ENCODE measurements at regions of chr19 and their contacts with region 1.

Region 1: DNA sequence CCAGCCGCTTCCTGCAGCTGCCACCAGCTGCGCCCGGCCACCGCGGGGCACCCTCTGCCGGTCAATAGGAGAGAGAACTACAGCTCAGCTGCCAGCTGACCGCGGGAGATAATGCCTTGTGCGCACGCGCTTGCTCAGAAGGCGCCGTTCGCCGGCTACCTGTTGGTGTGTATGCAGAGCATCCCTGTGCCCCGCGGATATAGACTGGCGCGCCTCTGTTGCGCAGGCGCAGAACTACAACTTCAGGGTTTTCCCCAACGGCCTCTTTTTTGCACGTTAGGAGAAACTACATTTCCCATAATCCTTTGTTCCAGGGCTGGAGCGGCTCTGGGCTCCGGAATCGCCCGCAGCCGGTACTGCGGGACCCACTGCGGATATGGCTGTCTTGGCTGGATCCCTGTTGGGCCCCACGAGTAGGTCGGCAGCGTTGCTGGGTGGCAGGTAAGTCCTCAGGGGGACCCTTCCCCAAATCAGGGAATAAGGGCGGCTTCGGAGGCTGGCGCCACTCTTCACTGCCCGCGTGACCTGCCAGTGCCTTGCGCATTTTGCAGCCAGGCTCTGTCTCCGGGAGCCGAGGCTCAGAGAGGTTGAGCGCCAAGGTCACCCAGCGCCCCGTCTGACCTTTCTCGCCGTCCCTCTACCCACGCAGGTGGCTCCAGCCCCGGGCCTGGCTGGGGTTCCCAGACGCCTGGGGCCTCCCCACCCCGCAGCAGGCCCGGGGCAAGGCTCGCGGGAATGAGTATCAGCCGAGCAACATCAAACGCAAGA is at the start of gene MRPL34:
- DNase-seq: peak; percentile 98
- H3K4me3 Mint-ChIP-seq: peak within 1 kb of the TSS; percentile 91
- H3K27ac Mint-ChIP-seq: peak within 1 kb of the TSS; percentile 93
- H3K4me1 Mint-ChIP-seq: peaks cover 42% of the 10 kb centered on the region
- H3K27me3 Mint-ChIP-seq: no peaks in the 10 kb centered on the region
- total RNA-seq, gene MRPL34: 101 and 103 TPM in 2 replicates

Region 2: DNA sequence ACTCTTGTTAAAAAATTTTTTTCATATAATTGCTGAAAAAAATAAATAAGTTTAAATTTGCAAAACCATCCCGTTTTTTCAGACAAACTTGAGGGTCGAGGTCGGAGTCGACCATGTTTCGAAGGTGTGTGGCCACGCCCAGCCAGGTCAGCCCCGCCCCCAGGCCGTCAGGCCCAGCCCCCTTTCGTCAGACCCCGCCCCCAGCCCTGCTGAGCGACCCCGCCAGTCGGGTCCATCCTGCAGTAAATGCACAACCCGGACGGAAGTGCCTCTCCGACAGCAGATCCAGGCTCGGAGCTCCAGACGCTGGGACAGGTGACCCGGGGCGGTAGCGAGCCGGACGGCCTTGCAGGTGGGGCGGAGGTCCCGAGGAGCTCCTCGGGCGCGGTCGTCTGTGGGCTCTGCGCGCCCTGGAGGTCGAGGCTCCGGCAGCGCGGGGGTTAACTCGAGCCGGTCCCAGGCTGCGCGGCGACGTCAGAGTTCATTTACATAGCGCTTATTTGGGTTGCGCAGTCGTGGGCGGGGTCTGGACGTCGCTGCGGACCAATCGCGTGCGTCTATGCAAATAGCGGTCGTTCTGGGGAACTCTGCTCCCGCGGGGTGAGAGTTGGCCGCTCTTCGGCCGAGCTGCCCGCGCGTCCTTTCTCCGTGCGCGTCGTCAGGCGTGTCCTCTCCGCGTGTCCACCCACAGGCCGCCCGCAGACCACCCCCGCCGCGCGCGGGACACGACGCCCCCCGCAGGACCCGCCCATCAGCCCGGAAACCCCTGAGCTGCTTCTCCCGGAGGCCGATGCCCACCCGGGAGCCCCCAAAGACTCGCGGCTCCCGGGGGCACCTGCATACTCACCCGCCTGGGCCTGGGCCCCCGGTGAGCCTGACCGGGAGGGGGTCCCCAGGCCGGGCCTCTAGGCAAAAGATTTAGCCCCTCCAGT is 79.4 kb before region 1 on chr19 and contains the start of gene OCEL1:
- intact Hi-C with region 1: loop called (anchors 5 kb)
- DNase-seq: peak; percentile 99
- H3K4me3 Mint-ChIP-seq: peak within 1 kb of the TSS; percentile 95
- H3K27ac Mint-ChIP-seq: peak within 1 kb of the TSS; percentile 99
- H3K4me1 Mint-ChIP-seq: peaks cover 3% of the 10 kb centered on the region
- H3K27me3 Mint-ChIP-seq: no peaks in the 10 kb centered on the region
- total RNA-seq, gene OCEL1: 17.8 and 23.0 TPM in 2 replicates

Region 3: DNA sequence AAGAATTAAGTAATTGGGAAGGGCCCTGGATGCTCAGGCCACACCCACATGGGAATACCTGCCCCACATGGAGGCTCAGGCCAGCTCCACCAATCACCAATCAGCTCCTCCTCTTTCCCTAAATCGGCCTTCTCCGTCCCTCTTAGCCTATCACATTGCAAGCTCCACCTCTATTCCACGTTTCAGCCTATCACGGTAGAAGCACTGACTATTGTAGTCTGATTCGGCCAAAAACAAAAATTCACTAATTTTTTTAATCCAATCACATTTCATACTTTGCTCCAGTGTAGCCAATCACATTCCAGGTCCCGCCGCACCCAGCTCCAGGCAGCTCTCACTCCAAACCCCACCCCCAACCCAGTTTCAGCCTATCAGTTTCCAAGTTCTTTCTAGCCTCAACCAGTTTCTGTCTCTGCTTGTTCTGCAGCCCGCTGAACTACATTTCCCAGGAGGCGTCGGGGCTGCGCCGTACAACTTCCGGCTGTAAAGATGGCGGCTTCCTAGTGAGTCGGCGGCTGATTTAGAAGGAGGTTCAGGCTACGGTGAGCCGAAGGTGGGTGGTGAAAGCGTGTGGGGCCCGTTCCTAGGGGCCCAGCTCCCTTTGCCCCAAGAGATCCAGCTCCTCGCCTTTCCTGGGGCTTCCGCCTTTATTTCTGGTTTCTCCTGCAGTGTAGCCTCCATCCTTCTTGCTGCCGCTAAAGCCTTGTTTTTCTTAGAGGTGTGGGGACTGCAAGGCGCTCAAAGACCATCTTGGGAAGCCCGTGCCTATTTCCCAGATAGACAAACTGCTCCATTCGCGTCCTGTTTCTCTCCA is 38.5 kb before region 1 on chr19 and contains the start of gene BABAM1:
- intact Hi-C with region 1: loop called (anchors 1 kb)
- DNase-seq: peak; percentile 98
- H3K4me3 Mint-ChIP-seq: peak within 1 kb of the TSS; percentile 95
- H3K27ac Mint-ChIP-seq: peak within 1 kb of the TSS; percentile 79
- H3K4me1 Mint-ChIP-seq: peaks cover 14% of the 10 kb centered on the region
- H3K27me3 Mint-ChIP-seq: no peaks in the 10 kb centered on the region
- total RNA-seq, gene BABAM1: 127 TPM in 2 replicates

Region 4: GRCh38 chr19:17292286-17293097 is 13.2 kb before region 1 on chr19:
- intact Hi-C with region 1: loop called (anchors 1 kb)
- DNase-seq: peak; percentile 95
- H3K4me3 Mint-ChIP-seq: peak overlapping the region; percentile 92
- H3K27ac Mint-ChIP-seq: peak overlapping the region; percentile 89
- H3K4me1 Mint-ChIP-seq: peaks cover 3% of the 10 kb centered on the region
- H3K27me3 Mint-ChIP-seq: peaks cover 7% of the 10 kb centered on the region

Region 5: GRCh38 chr19:17336872-17337722 is 31.4 kb after region 1 on chr19 and contains the start of gene GTPBP3:
- intact Hi-C with region 1: loop called (anchors 1 kb)
- DNase-seq: peak; percentile 99
- H3K4me3 Mint-ChIP-seq: peak within 1 kb of the TSS; percentile 99
- H3K27ac Mint-ChIP-seq: peak within 1 kb of the TSS; percentile 94
- H3K4me1 Mint-ChIP-seq: peaks cover 30% of the 10 kb centered on the region
- H3K27me3 Mint-ChIP-seq: no peaks in the 10 kb centered on the region
- total RNA-seq, gene GTPBP3: 69.9 and 70.3 TPM in 2 replicates

Region 6: DNA sequence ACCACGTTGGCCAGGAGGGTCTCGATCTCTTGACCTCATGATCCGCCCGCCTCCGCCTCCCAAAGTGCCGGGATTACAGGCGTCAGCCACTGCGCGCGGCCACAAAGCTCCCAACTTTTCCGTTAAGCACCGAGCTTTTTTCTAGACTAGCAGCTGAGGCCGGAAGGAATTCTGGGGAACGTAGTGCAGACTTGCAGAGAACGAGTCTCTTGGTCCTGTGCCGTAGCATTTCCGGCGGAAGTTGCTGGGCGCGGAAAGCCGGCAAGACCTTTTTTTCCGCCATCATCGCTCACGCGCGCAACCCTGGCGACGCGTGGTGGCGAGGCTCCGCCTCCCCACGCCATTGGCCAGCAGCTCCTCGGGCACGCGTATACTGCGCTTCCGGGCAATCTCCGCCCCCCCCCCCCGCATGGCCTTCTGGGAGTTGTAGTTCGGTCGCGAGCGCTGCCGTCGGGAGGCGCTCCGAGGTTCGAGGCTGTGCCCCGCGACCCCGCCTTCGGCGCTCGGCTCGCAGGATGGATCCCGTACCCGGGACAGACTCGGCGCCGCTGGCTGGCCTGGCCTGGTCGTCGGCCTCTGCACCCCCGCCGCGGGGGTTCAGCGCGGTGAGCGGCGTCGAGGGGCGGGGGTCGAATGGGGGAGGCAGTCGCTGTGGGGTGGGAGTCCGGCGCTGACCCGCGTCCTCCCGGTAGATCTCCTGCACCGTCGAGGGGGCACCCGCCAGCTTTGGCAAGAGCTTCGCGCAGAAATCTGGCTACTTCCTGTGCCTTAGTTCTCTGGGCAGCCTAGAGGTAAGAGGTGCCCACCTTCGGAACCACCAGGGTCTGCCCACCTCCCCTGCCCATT is 114.1 kb after region 1 on chr19 and contains the start of gene MVB12A:
- intact Hi-C with region 1: loop called (anchors 1 kb)
- DNase-seq: peak; percentile 98
- H3K4me3 Mint-ChIP-seq: peak within 1 kb of the TSS; percentile 92
- H3K27ac Mint-ChIP-seq: peak within 1 kb of the TSS; percentile 91
- H3K4me1 Mint-ChIP-seq: peaks cover 23% of the 10 kb centered on the region
- H3K27me3 Mint-ChIP-seq: no peaks in the 10 kb centered on the region
- total RNA-seq, gene MVB12A: 40.3 and 45.8 TPM in 2 replicates